ENCODE measurements at regions of chr17 and their contacts with region 1.

Region 1: GRCh38 chr17:74748529-74749365 is at the start of gene NHERF1:
- DNase-seq: peak; percentile 99
- CTCF ChIP-seq: peak; percentile 19

Region 2: DNA sequence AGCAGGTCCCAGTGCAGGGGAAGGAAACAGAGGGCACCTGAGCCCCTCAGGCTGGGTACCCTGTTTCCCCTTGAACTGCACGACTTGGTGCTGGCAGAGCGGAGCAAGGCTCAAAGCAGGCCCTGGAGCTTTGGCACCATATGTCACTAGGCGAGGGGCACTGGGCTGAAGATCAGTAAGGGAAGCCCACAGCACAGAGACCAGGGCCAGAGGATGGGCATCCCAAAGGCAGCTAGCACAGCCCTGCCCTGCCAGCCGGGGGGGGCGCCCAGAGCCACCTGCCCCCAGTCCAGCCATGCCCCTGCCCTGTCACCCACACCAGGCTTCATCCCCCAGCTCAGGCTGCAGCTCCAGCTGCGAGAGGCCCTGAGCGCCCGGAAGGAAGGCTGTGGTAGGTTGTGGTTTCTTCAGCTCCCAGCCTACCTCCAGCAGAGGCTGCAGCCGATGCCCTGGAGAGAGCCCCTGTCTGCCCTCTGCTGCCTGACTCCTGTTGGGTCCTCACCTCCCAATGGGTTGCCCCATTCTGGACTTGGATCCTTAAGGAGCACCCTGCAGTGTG is 10.6 kb after region 1 on chr17:
- CTCF ChIA-PET with region 1: interaction called, 18 read pairs
- POLR2A ChIA-PET with region 1: interaction called, 4 read pairs
- DNase-seq: peak; percentile 69
- CTCF ChIP-seq: peak; percentile 16

Region 3: GRCh38 chr17:74776044-74776977 is 27.6 kb after region 1 on chr17 and contains the start of gene NAT9:
- CTCF ChIA-PET with region 1: interaction called, 88 read pairs
- POLR2A ChIA-PET with region 1: interaction called, 3 read pairs
- DNase-seq: peak; percentile 100
- CTCF ChIP-seq: no peak

Region 4: DNA sequence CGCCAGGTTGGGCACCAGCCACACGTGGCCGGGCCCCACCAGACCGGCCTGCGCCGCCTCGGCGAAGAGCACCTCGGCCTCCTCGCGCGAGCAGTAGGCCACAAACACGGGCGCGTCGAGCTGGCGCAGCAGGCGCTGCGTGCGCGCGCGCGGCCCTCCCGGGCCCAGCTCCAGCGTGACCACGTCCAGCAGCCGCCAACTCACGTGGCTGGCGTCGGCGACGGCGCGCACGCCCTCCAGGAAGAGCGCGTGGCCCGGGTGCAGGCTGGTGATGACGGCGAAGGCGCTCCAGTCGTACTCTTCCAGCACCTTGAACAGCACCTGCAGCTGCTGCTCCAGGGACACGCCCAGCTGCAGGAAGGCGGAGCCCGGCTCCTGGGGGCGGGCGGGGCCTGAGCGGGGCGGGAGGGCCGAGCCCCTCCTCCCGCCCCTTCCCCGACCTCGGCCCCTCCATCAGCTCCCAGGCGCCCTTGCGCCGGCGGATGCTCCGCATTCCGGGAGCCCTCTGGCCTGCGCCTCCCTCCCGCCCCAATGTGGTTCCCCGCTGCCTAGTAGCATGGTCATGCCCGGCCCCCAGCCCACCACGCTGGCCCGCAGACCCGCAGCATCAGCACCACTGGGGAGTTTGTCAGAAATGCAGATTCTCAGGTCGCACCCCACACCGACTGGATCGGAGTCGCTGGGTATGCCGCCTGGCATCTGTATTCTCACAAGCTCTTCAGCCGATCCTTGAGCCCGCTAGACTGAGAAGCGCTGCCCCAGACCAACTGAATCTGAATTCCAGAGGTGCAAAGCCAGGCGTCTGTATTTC is 103.7 kb after region 1 on chr17:
- CTCF ChIA-PET with region 1: no interaction called
- POLR2A ChIA-PET with region 1: interaction called, 11 read pairs
- DNase-seq: peak; percentile 85
- CTCF ChIP-seq: no peak

Region 5: GRCh38 chr17:74873038-74873873 is 124.5 kb after region 1 on chr17:
- CTCF ChIA-PET with region 1: interaction called, 10 read pairs
- POLR2A ChIA-PET with region 1: no interaction called
- DNase-seq: peak; percentile 100
- CTCF ChIP-seq: no peak

Measured in GM10248 (cell line).